ENCODE measurements at regions of chr6 and their contacts with region 1.

Region 1: GRCh38 chr6:156517088-156517487 is 260.1 kb upstream of the ARID1B start:
- DNase-seq: no peak
- ATAC-seq: no peak
- H3K4me3 ChIP-seq: no peak overlapping the region
- H3K27ac ChIP-seq: no peak overlapping the region
- H3K4me1 ChIP-seq: peaks cover 0 to 6% (median 0%) of the 10 kb centered on the region in 9 donors
- H3K27me3 ChIP-seq: no peaks in the 10 kb centered on the region
- CTCF ChIP-seq: no peak

Region 2: DNA sequence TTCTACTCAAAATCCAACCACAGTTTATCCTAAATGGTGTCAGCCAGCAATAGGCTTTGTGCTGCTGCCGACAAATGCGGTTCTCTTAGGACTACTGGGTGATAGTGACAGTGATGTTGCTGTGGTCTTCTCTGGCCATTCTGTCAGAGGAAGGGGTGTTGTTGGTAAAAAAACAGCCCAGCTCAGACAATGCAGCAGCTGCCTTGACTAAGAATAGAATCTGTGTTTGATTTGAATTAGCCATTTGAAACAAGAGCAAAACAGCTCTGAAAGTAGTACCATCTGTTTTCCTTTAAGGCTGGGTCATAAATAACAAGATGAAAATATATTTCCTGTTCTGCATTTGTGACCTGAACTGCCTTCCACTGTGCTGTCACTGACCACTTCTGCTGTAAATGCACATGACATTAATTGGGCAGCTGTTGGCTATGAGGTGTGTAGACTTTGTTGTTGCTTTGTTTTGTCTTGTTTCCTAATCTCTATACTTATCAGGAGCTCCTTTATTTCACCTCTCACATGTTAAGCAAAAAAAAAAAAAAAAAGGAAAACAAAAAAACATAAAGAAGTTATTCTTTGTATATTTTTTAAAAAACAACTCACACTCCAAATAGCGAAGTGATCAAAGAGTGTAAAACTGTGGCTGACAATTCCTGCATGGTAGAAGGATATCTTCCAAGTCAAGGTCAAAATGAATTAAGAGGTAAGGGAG is 237.7 kb before region 1 on chr6:
- intact Hi-C with region 1: loop called in 1 of 10 experiments (anchors 10 kb)
- DNase-seq: no peak
- ATAC-seq: peak in 6 of 8 donors; percentile 25 to 68 (median 59)
- H3K4me3 ChIP-seq: no peak overlapping the region
- H3K27ac ChIP-seq: peak overlapping the region in 3 of 10 donors; percentile 21 to 54 (median 28)
- H3K4me1 ChIP-seq: peaks cover 0 to 14% (median 7%) of the 10 kb centered on the region in 9 donors
- H3K27me3 ChIP-seq: no peaks in the 10 kb centered on the region
- CTCF ChIP-seq: no peak

Measured in heart right ventricle (tissue), 16 donors.